Ascending aorta (tissue), 2 donors: ENCODE measurements at regions of chr4 and their contacts with region 1.

Region 1: GRCh38 chr4:99655308-99656081 is 2.1 kb downstream of the C4orf54 start:
- DNase-seq: peak; percentile 14 to 75
- H3K4me3 ChIP-seq: no peak overlapping the region
- H3K27ac ChIP-seq: peak overlapping the region; percentile 40 to 54
- H3K4me1 ChIP-seq: peaks cover 3 to 4% of the 10 kb centered on the region in 2 donors
- H3K27me3 ChIP-seq: no peaks in the 10 kb centered on the region
- CTCF ChIP-seq: no peak

Region 2: DNA sequence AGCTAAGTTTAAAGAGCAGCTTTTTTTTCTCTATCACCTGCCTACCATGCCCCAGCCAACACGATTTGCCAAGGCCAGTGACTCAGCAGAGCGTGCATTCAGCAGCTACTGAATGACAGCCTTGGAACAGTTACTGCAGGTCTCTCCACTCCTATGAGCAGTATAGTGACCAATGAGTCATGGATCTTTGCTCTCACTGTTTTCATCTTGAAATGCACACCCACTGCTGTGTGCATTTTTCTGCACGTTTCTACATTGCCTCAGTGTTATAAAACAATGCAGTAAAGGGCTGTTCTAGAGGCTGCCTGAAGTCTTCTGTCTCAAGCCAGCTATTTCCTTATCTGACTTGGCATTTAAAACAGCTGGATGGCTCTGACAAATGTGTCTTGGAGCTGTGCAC is 68.1 kb after region 1 on chr4:
- intact Hi-C with region 1: loop called (anchors 5 kb)
- DNase-seq: peak; percentile 41 to 69
- H3K4me3 ChIP-seq: no peak overlapping the region
- H3K27ac ChIP-seq: peak overlapping the region in 1 of 2 donors; percentile 36
- H3K4me1 ChIP-seq: peaks cover 0 to 12% of the 10 kb centered on the region in 2 donors
- H3K27me3 ChIP-seq: no peaks in the 10 kb centered on the region
- CTCF ChIP-seq: no peak

Region 3: DNA sequence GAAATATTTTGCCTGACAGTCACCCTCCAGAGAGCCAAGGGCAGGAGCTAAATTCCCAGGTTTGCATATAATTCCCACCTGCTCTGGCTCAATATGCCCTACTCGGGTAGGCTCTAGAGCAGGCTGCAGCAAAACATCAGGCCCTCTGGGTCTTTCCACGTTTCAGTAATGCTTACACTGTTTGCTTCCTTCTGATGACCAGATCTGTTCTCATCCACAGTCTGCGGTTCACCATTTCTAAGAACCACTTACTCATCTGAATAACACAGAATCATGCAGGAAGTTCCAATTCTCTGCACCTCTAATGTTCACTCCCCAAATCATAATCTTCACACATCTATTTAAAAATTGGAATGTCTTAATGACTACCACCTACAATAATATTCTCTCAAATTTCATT is 1550.4 kb after region 1 on chr4:
- intact Hi-C with region 1: no loop called
- DNase-seq: no peak
- H3K4me3 ChIP-seq: no peak overlapping the region
- H3K27ac ChIP-seq: no peak overlapping the region
- H3K4me1 ChIP-seq: no peaks in the 10 kb centered on the region
- H3K27me3 ChIP-seq: no peaks in the 10 kb centered on the region
- CTCF ChIP-seq: no peak